Activated naive CD4-positive, alpha-beta T cell treated with anti-CD3 and anti-CD28 coated beads, Interleukin-2, amount 10 ng/mL, durations not matched to agents 7 days and 5 days (primary cell): ENCODE measurements at regions of chr1 and their contacts with region 1.

Region 1: GRCh38 chr1:101238681-101239094 is 1.9 kb downstream of the S1PR1 start:
- DNase-seq: peak; percentile 92
- H3K4me3 Mint-ChIP-seq: peak overlapping the region; percentile 97
- H3K27ac Mint-ChIP-seq: peak overlapping the region; percentile 99
- H3K4me1 Mint-ChIP-seq: peaks cover 52% of the 10 kb centered on the region
- H3K27me3 Mint-ChIP-seq: peaks cover 14% of the 10 kb centered on the region

Region 2: GRCh38 chr1:100928128-100928527 is 310.6 kb before region 1 on chr1:
- CTCF ChIA-PET with region 1: interaction called, 14 read pairs
- DNase-seq: peak; percentile 27
- H3K4me3 Mint-ChIP-seq: no peak overlapping the region
- H3K27ac Mint-ChIP-seq: no peak overlapping the region
- H3K4me1 Mint-ChIP-seq: peaks cover 36% of the 10 kb centered on the region
- H3K27me3 Mint-ChIP-seq: no peaks in the 10 kb centered on the region

Region 3: GRCh38 chr1:101136739-101137138 is 101.9 kb before region 1 on chr1:
- CTCF ChIA-PET with region 1: interaction called, 75 read pairs
- DNase-seq: peak; percentile 54
- H3K4me3 Mint-ChIP-seq: peak overlapping the region; percentile 45
- H3K27ac Mint-ChIP-seq: peak overlapping the region; percentile 86
- H3K4me1 Mint-ChIP-seq: peaks cover 72% of the 10 kb centered on the region
- H3K27me3 Mint-ChIP-seq: no peaks in the 10 kb centered on the region

Region 4: GRCh38 chr1:101178688-101179491 is 59.8 kb before region 1 on chr1:
- CTCF ChIA-PET with region 1: interaction called, 23 read pairs
- DNase-seq: peak; percentile 30
- H3K4me3 Mint-ChIP-seq: peak overlapping the region; percentile 84
- H3K27ac Mint-ChIP-seq: peak overlapping the region; percentile 99
- H3K4me1 Mint-ChIP-seq: peaks cover 76% of the 10 kb centered on the region
- H3K27me3 Mint-ChIP-seq: no peaks in the 10 kb centered on the region

Region 5: GRCh38 chr1:101198842-101199636 is 39.6 kb before region 1 on chr1:
- CTCF ChIA-PET with region 1: interaction called, 11 read pairs
- DNase-seq: peak; percentile 34
- H3K4me3 Mint-ChIP-seq: no peak overlapping the region
- H3K27ac Mint-ChIP-seq: peak overlapping the region; percentile 84
- H3K4me1 Mint-ChIP-seq: peaks cover 19% of the 10 kb centered on the region
- H3K27me3 Mint-ChIP-seq: no peaks in the 10 kb centered on the region

Region 6: DNA sequence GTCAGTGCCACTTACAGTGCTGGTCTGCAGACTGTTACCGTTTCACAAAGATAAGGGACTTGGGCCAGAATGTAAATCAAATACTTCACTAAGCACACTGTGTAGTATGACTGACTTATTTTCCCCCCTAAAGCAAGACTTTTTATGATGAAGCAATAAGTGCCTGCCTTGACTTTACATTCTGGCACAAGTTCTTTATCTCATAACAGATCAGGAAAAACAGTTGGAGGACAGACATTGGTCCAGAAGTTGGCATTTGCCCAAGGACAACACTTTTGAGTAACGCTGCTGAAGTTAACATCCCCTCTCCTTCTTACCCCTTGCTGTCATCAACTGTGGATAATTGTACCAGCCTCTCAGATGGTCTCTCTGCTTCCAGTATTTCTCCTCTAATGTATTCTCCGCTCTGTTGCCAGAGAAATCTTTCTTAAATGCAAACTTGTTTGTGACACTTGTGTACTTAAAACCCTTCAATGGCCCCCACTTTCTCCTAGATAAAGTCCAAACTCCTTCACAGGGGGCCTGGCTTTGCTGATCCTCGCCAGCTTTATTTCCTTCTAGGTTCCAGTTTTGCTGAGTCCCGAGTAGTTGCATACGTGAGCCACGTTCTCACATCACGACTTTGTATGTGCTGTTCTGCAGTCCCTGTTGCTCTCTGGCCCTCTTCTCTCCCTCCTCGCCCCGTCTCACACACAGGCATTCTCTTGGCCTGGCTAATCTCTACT is 43.8 kb after region 1 on chr1:
- CTCF ChIA-PET with region 1: interaction called, 104 read pairs
- DNase-seq: no peak
- H3K4me3 Mint-ChIP-seq: peak overlapping the region; percentile 1
- H3K27ac Mint-ChIP-seq: peak overlapping the region; percentile 93
- H3K4me1 Mint-ChIP-seq: peaks cover 95% of the 10 kb centered on the region
- H3K27me3 Mint-ChIP-seq: peaks cover 2% of the 10 kb centered on the region